Body of pancreas (tissue), 4 donors: ENCODE measurements at regions of chr19 and their contacts with region 1.

Region 1: DNA sequence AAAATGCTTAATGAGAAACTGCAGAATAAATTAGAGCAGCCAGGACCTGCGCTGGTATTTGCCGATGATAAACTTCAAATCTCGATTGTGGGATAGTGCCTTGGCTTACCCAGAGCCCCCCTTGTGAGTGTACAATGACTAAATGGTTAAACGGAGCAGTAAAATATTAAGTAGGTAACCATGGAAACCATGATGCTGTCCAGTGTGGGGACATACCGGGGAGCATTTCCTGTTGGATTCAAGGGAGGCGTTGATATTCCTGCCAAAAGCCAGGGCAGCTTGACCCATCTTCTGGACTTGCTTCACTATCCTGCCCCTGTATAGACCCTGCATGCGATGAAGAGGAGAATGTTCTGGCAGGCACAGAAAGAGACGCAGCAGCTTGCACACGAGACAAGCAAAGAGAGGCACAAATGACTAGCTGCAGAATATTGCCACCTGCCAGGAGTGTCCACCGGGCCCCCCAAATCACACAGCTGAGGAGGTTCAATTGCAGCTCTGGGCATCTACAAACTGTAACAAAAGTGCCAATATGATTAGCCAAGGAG is 255.3 kb upstream of the TSHZ3 start:
- DNase-seq: no peak
- ATAC-seq: no peak
- H3K4me3 ChIP-seq: no peak overlapping the region
- H3K27ac ChIP-seq: no peak overlapping the region
- H3K4me1 ChIP-seq: no peaks in the 10 kb centered on the region
- H3K27me3 ChIP-seq: no peaks in the 10 kb centered on the region
- CTCF ChIP-seq: no peak
- POLR2A ChIP-seq: no peak

Region 2: GRCh38 chr19:30812099-30812678 is 792.4 kb before region 1 on chr19:
- intact Hi-C with region 1: loop called (anchors 5 kb)
- DNase-seq: no peak
- ATAC-seq: no peak
- H3K4me3 ChIP-seq: no peak overlapping the region
- H3K27ac ChIP-seq: no peak overlapping the region
- H3K4me1 ChIP-seq: no peaks in the 10 kb centered on the region
- H3K27me3 ChIP-seq: peaks cover 0 to 3% of the 10 kb centered on the region in 2 donors
- CTCF ChIP-seq: no peak
- POLR2A ChIP-seq: no peak

Region 3: GRCh38 chr19:31784671-31785101 is 180.1 kb after region 1 on chr19:
- intact Hi-C with region 1: no loop called
- DNase-seq: no peak
- ATAC-seq: no peak
- H3K4me3 ChIP-seq: no peak overlapping the region
- H3K27ac ChIP-seq: no peak overlapping the region
- H3K4me1 ChIP-seq: no peaks in the 10 kb centered on the region
- H3K27me3 ChIP-seq: no peaks in the 10 kb centered on the region
- CTCF ChIP-seq: no peak
- POLR2A ChIP-seq: no peak